ENCODE measurements at regions of chr6 and their contacts with region 1.

Region 1: DNA sequence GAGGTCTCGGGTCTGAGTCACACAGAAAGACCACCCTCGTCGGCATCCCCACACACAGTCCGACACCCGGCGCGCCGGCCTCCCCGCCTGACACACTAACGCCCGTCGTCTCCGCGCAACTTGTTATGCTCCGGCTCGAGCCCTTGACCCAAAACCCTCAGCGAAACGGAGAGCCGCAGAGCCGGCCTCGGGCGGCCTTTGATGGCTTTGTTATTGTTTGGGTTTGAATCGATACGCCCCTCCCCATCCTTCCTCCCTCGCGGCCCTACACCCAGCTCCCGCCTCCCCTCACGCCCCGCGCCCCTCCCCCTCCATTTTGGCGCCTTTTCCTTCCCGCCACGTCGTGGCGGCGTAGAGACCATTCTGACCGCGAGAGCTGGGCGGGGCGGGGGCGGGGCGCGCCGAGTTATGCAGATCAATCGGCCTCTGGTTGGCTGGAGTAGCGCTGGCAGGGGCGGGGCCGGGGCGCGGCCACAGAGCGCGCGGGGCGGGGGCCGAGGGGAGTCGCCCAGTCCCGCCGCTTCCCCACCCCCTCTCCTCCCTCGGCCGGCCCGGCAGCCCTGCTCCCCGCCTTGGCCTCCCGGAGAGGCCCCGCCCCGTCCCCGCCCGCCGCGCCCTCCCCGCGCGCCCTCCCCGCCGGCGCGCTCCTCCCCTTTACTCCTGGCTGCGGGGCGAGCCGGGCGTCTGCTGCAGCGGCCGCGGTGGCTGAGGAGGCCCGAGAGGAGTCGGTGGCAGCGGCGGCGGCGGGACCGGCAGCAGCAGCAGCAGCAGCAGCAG is at the start of gene PIM1:
- DNase-seq: peak; percentile 99 to 100
- H3K4me3 ChIP-seq: peak within 1 kb of the TSS; percentile 81
- CTCF ChIP-seq: peak in 1 of 3 donors; percentile 60
- POLR2A ChIP-seq: no peak
- total RNA-seq, gene PIM1: 136 to 173 (median 150) TPM

Region 2: DNA sequence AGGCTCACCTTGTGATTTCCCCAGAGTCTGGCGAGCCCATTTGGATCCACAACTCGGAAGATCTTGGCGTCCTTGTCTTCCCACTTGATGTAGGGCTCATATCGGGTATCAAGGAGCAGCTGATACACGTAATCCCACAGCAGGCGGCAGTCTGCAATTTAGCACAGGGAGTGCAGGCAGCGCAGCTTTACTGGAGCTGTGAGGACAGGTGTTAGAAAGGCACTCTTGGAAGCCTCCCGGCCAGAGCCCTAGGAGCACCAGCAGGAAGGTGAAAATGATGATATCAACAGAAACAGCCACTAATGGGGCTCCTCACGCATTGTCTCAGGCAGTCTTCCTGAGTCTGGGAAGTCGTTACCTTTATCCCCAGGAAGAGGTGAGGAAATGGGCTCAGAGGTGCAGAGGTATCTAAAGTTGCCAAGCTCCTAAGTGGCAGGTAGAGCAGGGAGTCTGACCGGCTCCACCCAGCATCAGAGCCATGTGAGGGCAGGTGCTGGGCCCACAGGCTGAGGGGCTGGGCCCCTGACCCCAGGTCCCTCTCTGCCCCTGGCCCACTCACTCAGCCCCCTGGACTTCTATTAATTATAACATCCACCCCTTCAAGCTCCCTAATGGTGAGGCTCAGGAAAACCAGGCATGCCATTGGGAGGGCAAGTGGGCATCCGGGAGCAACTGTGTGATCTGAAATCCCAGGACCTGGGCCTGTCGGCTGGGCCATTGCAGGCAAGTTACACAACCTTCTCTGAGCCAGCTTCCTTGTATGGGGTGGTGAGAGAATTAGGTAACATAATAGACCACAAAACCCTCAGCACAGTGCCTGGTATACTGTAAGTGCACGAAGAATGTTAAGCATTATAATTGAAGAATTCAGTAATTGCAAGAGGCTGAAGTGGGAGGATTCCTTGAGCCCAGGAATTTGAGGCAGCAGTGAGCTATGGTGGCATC is 800.5 kb before region 1 on chr6:
- intact Hi-C with region 1: no loop called
- DNase-seq: no peak
- H3K4me3 ChIP-seq: no peak overlapping the region
- CTCF ChIP-seq: no peak
- POLR2A ChIP-seq: no peak

Region 3: DNA sequence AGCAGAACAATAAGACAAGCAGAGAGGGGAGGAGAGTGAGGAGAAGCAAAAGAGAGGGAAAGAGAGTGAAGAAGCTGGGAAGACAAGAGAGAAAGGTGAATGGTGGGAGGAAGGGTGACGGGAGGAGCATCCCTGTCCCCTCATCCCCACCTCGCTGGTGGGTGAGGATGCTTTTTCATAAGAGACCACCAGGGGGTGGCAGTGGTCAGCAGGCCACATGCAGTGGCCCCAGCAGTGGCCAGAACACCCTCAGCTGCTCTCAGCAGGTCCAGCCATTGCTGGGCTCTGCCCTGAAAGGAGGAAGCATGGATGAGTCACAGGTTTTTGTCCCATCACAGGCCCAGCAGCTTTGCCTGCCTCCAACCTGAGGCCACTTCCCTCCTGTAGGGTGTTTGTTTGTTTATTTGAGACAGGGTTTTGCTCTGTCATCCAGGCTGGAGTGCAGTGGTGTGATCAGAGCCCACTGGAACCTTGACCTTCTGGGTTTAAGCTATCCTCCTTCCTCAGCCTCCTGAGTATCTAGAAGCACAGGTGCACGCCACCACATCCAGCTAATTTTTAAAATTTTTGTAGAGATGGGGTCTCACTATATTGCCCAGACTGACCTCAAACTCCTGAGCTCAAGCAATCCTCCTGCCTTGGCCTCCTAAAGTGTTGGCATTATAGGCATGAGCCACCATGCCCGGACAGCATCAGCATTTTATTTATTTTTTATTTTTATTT is 140.3 kb before region 1 on chr6:
- intact Hi-C with region 1: loop called (anchors 10 kb)
- DNase-seq: peak in 1 of 2 donors; percentile 59
- H3K4me3 ChIP-seq: no peak overlapping the region
- CTCF ChIP-seq: peak in 1 of 3 donors; percentile 54
- POLR2A ChIP-seq: no peak

Region 4: GRCh38 chr6:37051138-37052026 is 118.3 kb before region 1 on chr6:
- intact Hi-C with region 1: loop called (anchors 5 kb)
- DNase-seq: peak; percentile 78 to 98
- H3K4me3 ChIP-seq: no peak overlapping the region
- CTCF ChIP-seq: peak in 1 of 3 donors; percentile 76
- POLR2A ChIP-seq: no peak